ENCODE measurements at regions of chr3 and their contacts with region 1.

Region 1: GRCh38 chr3:55485211-55485791 is 1.8 kb downstream of the WNT5A start:
- DNase-seq: peak; percentile 74 to 77
- ATAC-seq: peak; percentile 79

Region 2: GRCh38 chr3:55721716-55722484 is 236.6 kb after region 1 on chr3:
- intact Hi-C with region 1: loop called in 1 of 2 experiments (anchors 10 kb)
- DNase-seq: peak in 1 of 2 donors; percentile 28
- ATAC-seq: peak; percentile 68

Region 3: DNA sequence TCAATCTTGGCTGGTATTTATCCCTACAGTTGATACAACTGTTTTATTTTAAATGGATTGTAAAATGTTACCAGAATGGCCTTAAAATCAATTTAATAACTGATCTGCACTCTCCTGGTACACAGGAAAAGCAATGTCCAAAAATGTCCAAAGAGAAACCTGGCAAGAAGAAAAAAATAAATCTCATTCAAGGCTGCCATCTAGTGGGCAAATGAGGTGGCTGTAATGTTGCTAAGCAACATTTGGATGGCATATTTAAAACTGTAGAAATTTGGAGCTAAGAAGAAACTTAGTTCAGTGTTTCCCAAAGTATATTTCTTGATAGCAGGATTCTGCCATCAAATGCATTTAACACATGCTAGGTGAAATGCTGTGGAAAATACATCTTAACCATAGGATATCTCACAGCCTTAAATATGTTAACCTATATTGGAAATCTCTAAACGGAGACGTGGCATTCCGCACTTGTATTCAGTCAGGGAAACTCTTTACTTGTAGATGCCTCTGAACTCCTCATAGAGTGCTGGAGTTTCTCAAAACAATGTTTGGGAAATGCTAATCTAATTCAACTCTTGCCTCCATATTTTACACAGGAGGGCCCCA is 766.1 kb after region 1 on chr3:
- intact Hi-C with region 1: loop called in 1 of 2 experiments (anchors 10 kb)
- DNase-seq: peak in 1 of 2 donors; percentile 21
- ATAC-seq: no peak

Region 4: GRCh38 chr3:56593455-56594158 is 1108.3 kb after region 1 on chr3:
- intact Hi-C with region 1: no loop called
- DNase-seq: no peak
- ATAC-seq: peak; percentile 41